ENCODE measurements at regions of chr1 and their contacts with region 1.

Region 1: DNA sequence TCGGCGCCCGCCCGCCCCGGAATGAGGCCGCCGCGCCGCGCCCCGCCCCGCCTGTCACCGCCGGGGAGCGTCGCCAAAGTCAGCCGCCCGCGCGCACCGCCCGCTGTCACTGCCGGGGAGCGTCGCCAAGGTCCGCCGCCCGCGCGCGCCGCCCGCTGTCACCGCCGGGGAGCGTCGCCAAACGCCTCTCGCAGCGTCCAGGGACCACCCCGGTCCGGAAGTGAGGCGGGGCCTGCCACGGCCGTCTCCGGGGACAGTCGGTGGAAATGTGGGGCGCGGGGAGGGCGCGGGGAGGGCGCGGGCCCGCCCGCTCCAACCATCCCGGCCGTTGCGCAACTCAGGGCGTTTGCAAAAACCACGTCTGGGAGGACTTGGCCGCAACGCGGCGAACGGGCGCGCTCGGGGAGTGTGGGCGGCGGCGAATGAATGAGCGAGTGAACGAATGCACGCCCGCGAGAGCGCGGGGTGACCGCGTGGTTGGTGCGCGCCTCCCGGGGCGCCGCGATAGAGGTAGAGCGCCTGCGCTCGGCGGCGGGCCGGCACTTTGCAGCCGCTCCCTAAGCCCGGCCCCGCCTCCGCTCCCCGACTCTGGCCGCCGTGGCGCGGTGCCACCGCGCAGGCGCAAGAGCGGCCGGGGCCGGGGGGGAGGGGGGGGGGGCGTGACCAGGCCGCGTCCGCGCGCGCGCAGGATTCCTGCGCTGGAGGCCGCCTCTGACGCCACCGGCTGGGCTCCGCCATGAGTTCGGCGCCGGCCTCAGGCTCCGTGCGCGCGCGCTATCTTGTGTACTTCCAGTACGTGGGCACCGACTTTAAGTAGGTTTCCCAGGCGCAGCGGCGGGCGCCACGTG is at the starts of genes ACAP3 and PUSL1:
- DNase-seq: peak; percentile 88
- H3K4me3 Mint-ChIP-seq: peak within 1 kb of the TSS; percentile 79
- H3K27ac Mint-ChIP-seq: peak within 1 kb of the TSS; percentile 77
- H3K4me1 Mint-ChIP-seq: peaks cover 23% of the 10 kb centered on the region
- H3K27me3 Mint-ChIP-seq: no peaks in the 10 kb centered on the region
- total RNA-seq, gene ACAP3: 24.1 to 25.3 TPM
- total RNA-seq, gene PUSL1: 17.0 to 17.6 TPM

Region 2: GRCh38 chr1:999725-1000356 is 308.3 kb before region 1 on chr1 and contains the start of gene HES4:
- CTCF ChIA-PET with region 1: no interaction called
- intact Hi-C with region 1: loop called (anchors 1 kb)
- DNase-seq: peak; percentile 68
- H3K4me3 Mint-ChIP-seq: peak within 1 kb of the TSS; percentile 71
- H3K27ac Mint-ChIP-seq: peak within 1 kb of the TSS; percentile 80
- H3K4me1 Mint-ChIP-seq: peaks cover 12% of the 10 kb centered on the region
- H3K27me3 Mint-ChIP-seq: peaks cover 35% of the 10 kb centered on the region
- total RNA-seq, gene HES4: 4.1 to 4.7 TPM

Region 3: GRCh38 chr1:1231400-1232223 is 76.5 kb before region 1 on chr1 and contains the start of gene SDF4:
- CTCF ChIA-PET with region 1: no interaction called
- intact Hi-C with region 1: loop called (anchors 1 kb)
- DNase-seq: peak; percentile 97
- H3K4me3 Mint-ChIP-seq: peak within 1 kb of the TSS; percentile 86
- H3K27ac Mint-ChIP-seq: peak within 1 kb of the TSS; percentile 86
- H3K4me1 Mint-ChIP-seq: peaks cover 35% of the 10 kb centered on the region
- H3K27me3 Mint-ChIP-seq: no peaks in the 10 kb centered on the region
- total RNA-seq, gene SDF4: 74.7 to 79.5 TPM

Region 4: DNA sequence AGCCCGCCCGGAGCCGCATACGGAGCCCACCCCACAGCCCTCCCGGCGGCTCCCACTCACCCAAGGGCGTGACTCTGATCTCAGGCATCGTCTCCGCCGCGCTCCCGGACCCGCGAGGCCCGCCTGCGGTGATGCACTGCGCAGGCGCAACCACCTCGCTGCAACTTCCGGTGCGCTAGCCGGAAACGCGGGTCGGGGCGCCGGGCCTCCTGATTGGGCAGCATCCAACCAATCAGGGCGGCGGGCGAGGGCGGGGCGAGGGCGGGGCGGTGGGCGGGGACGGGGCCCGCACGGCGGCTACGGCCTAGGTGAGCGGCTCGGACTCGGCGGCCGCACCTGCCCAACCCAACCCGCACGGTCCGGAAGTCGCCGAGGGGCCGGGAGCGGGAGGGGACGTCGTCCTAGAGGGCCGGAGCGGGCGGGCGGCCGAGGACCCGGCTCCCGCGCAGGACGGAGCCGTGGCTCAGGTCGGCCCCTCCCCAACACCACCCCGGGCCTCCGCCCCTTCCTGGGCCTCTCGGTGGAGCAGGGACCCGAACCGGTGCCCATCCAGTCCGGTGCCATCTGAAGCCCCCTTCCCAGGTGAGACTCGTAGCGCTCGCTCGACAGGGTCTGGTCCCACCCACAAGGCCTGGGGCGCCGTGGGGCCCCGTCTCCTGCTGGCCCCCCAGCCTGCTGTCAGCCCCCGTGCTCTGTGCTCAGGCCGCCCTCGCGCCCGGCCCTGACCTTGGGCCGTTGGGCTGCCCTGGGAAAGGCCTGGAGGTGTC is 16.6 kb after region 1 on chr1 and contains the starts of genes CPTP and INTS11:
- CTCF ChIA-PET with region 1: no interaction called
- intact Hi-C with region 1: loop called (anchors 1 kb)
- DNase-seq: peak; percentile 97
- H3K4me3 Mint-ChIP-seq: peak within 1 kb of the TSS; percentile 92
- H3K27ac Mint-ChIP-seq: peak within 1 kb of the TSS; percentile 84
- H3K4me1 Mint-ChIP-seq: peaks cover 36% of the 10 kb centered on the region
- H3K27me3 Mint-ChIP-seq: no peaks in the 10 kb centered on the region
- total RNA-seq, gene CPTP: 5.6 to 5.7 TPM
- total RNA-seq, gene INTS11: 117 to 118 TPM

Region 5: GRCh38 chr1:1380860-1381259 is 72.7 kb after region 1 on chr1:
- CTCF ChIA-PET with region 1: no interaction called
- intact Hi-C with region 1: no loop called
- DNase-seq: no peak
- H3K4me3 Mint-ChIP-seq: no peak overlapping the region
- H3K27ac Mint-ChIP-seq: no peak overlapping the region
- H3K4me1 Mint-ChIP-seq: peaks cover 2% of the 10 kb centered on the region
- H3K27me3 Mint-ChIP-seq: no peaks in the 10 kb centered on the region

Region 6: GRCh38 chr1:1511533-1512285 is 203.6 kb after region 1 on chr1 and contains the start of gene ATAD3A:
- CTCF ChIA-PET with region 1: no interaction called
- intact Hi-C with region 1: loop called (anchors 5 kb)
- DNase-seq: peak; percentile 99
- H3K4me3 Mint-ChIP-seq: peak within 1 kb of the TSS; percentile 80
- H3K27ac Mint-ChIP-seq: peak within 1 kb of the TSS; percentile 73
- H3K4me1 Mint-ChIP-seq: peaks cover 10% of the 10 kb centered on the region
- H3K27me3 Mint-ChIP-seq: no peaks in the 10 kb centered on the region
- total RNA-seq, gene ATAD3A: 39.4 to 41.0 TPM